ENCODE measurements at regions of chr21 and their contacts with region 1.

Region 1: GRCh38 chr21:42097860-42098454 is 26.8 kb downstream of the UMODL1 start:
- DNase-seq: peak in 3 of 10 donors; percentile 39 to 74 (median 62)
- H3K4me3 ChIP-seq: no peak overlapping the region
- H3K27ac ChIP-seq: peak overlapping the region in 54 of 59 donors; percentile 15 to 87 (median 74)
- H3K27me3 ChIP-seq: peaks cover 0 to 3% (median 0%) of the 10 kb centered on the region in 45 donors
- CTCF ChIP-seq: peak in 1 of 56 donors; percentile 11

Region 2: GRCh38 chr21:41006636-41007035 is 1091.3 kb before region 1 on chr21:
- intact Hi-C with region 1: no loop called
- DNase-seq: no peak
- H3K4me3 ChIP-seq: no peak overlapping the region
- H3K27ac ChIP-seq: no peak overlapping the region
- H3K27me3 ChIP-seq: peaks cover 0 to 19% (median 5%) of the 10 kb centered on the region in 45 donors
- CTCF ChIP-seq: no peak

Region 3: GRCh38 chr21:41802684-41803083 is 295.3 kb before region 1 on chr21:
- intact Hi-C with region 1: no loop called
- DNase-seq: peak in 9 of 10 donors; percentile 51 to 86 (median 74)
- H3K4me3 ChIP-seq: peak overlapping the region in 21 of 59 donors; percentile 4 to 46 (median 16)
- H3K27ac ChIP-seq: peak overlapping the region in 10 of 59 donors; percentile 0 to 56 (median 36)
- H3K27me3 ChIP-seq: no peaks in the 10 kb centered on the region
- CTCF ChIP-seq: peak in 7 of 56 donors; percentile 7 to 19 (median 12)

Region 4: DNA sequence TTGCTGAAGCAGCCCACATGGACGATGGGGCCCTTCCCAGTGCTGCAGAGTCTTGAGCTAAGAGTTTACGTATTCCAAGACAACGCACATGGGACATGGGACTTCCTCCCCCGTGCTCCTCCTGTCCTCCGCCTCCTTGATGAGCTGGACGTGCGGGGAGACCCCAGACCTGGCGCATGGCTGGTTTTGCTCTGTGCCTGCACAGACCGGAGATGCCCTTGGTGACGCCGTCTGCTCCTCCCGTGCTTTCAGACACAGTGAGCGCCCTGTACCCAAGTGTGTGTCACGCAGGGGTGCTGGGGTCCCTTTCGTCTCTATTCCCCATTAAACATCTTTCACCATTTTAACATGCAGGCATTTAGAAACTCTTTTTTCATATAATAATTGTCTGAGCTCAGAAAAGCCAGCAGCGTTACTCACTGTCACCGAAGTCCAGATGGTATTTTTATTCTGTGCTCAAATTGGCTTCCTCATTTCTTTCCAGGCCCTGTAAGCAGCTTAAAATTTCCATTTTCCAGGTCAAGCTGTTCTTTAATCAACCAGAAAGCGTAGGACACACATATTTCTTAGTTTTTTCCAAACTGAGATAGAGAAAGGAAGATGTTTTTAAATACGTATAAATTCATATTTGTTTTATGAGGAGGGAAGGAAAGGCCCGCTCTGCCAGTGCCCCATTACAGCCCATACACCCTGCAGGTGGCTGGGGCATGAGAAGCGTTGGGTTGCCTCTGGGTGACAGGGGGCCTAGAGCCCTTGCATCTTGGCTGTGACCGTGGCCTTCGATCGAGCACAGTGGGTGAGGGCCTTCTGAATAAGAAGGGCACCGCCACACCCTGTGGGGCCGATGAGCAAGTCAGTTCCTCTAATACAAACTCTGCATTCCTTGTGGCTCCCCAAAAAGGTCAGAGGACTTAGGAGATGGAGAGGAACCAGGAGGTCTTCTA is 69.9 kb before region 1 on chr21:
- intact Hi-C with region 1: loop called (anchors 5 kb)
- DNase-seq: peak in 6 of 10 donors; percentile 34 to 69 (median 57)
- H3K4me3 ChIP-seq: peak overlapping the region in 2 of 59 donors; percentile 2 to 5
- H3K27ac ChIP-seq: peak overlapping the region in 58 of 59 donors; percentile 13 to 94 (median 85)
- H3K27me3 ChIP-seq: no peaks in the 10 kb centered on the region
- CTCF ChIP-seq: no peak